PC-9 (cell line): ENCODE measurements at regions of chr5 and their contacts with region 1.

Region 1: GRCh38 chr5:170420780-170421412 is 31.7 kb upstream of the KCNMB1 start:
- DNase-seq: peak; percentile 27 to 46
- H3K4me3 ChIP-seq: no peak overlapping the region
- H3K27ac ChIP-seq: no peak overlapping the region
- H3K4me1 ChIP-seq: no peaks in the 10 kb centered on the region
- H3K27me3 ChIP-seq: peaks cover 4% of the 10 kb centered on the region; the same call in 1 of the 2 replicates
- CTCF ChIP-seq: peak; percentile 85

Region 2: GRCh38 chr5:170225326-170226128 is 195.4 kb before region 1 on chr5:
- CTCF ChIA-PET with region 1: no interaction called
- POLR2A ChIA-PET with region 1: no interaction called
- intact Hi-C with region 1: loop called (anchors 1 kb)
- DNase-seq: peak; percentile 40 to 50
- H3K4me3 ChIP-seq: no peak overlapping the region
- H3K27ac ChIP-seq: no peak overlapping the region
- H3K4me1 ChIP-seq: peaks cover 3% of the 10 kb centered on the region
- H3K27me3 ChIP-seq: no peaks in the 10 kb centered on the region
- CTCF ChIP-seq: peak; percentile 88

Region 3: GRCh38 chr5:170267431-170268152 is 153.3 kb before region 1 on chr5:
- CTCF ChIA-PET with region 1: no interaction called
- POLR2A ChIA-PET with region 1: no interaction called
- intact Hi-C with region 1: loop called (anchors 5 kb)
- DNase-seq: peak; percentile 45 to 52
- H3K4me3 ChIP-seq: peak overlapping the region; percentile 50; the same call in 1 of the 2 replicates
- H3K27ac ChIP-seq: no peak overlapping the region
- H3K4me1 ChIP-seq: no peaks in the 10 kb centered on the region
- H3K27me3 ChIP-seq: peaks cover 24% of the 10 kb centered on the region; the same call in 1 of the 2 replicates
- CTCF ChIP-seq: peak; percentile 90